OCI-LY7 (cell line): ENCODE measurements at regions of chr2 and their contacts with region 1.

Region 1: GRCh38 chr2:227890495-227891079 is 19.2 kb downstream of the DAW1 start:
- DNase-seq: peak; percentile 64
- H3K4me3 ChIP-seq: no peak overlapping the region
- H3K27ac ChIP-seq: no peak overlapping the region
- H3K4me1 ChIP-seq: no peaks in the 10 kb centered on the region
- CTCF ChIP-seq: peak; percentile 85

Region 2: DNA sequence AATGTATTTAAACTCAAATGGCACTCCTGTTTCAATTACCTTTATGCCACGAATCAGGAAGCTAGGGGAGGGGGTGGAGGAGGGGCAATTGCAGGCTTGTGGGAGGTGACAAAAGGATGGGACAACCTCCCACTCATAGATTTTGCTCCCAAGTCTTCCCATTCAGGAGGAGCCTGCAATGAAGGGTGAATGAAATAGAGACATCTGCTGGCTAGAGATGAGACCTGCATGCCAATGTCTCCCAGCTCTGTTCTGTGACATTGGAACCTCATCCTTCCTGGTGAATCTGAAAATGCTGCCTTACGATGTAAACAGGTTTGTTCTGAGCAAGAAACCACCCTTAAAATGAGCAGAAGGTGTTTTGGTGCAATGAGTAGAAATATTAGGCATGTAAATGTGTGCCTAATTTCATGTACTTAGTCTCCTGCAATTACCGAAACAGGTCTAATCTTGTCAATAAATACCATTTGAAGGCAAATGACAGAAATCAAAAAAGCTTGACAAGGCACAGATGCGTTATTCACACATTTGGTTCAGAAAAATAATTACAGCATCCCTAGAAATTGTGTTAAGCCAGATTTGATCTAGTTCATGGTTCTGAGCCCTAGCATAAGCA is 1383.2 kb after region 1 on chr2:
- CTCF ChIA-PET with region 1: no interaction called
- POLR2A ChIA-PET with region 1: no interaction called
- intact Hi-C with region 1: loop called (anchors 5 kb)
- DNase-seq: peak; percentile 30
- H3K4me3 ChIP-seq: no peak overlapping the region
- H3K27ac ChIP-seq: no peak overlapping the region
- H3K4me1 ChIP-seq: no peaks in the 10 kb centered on the region
- CTCF ChIP-seq: peak; percentile 84